A673 (cell line): ENCODE measurements at regions of chr5 and their contacts with region 1.

Region 1: DNA sequence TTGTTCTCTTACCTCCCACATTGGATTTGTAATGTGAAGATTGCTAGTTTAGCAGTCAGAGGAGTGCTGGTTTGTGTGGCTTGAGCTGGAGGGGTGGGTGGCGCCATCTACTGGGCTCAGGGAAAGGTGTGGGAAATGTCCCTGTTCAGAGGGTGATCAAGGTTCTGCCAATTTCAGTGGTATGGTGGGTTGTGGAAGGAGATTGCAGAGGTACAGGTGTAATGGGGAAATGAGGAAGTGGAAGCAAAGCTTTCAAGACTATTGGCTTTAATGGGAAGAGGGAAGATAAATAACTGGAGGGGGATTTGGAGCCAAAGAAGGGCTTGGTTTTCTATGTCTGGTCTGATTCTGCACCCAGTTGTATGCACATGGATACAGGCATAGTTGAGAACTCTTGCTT is 76.4 kb downstream of the OSMR start:
- DNase-seq: peak; percentile 72
- H3K4me3 ChIP-seq: no peak overlapping the region
- H3K27ac ChIP-seq: no peak overlapping the region
- H3K4me1 ChIP-seq: no peaks in the 10 kb centered on the region
- H3K27me3 ChIP-seq: no peaks in the 10 kb centered on the region
- CTCF ChIP-seq: peak; percentile 96

Region 2: DNA sequence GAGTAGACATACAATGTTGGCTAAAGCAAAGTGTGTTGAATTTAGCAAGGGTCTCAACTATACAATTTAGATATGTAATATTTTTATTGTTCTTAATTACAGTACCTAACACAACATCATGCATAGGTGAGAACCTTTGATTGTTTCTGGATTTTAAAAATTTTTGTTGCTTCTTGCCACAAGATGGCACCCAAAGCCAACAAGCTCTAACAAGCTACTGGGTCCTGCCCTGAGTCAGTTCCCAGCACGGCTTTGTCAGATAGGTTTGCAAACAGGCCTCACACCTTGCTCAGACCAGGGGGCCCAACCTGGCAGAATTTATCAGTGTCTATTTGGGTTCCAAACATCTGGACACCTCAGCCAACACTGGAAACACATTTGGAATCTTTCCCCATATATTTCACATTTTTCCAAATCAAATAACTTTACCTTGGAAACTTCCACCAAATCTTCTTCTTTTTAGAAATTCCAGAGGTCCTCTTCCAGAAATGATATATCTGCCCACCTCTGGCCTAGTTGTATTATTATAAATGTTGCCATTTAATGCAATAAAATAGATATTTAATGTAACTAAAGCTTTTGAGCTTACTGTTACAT is 713.3 kb before region 1 on chr5:
- CTCF ChIA-PET with region 1: no interaction called
- POLR2A ChIA-PET with region 1: no interaction called
- intact Hi-C with region 1: loop called (anchors 5 kb)
- DNase-seq: peak; percentile 65
- H3K4me3 ChIP-seq: no peak overlapping the region
- H3K27ac ChIP-seq: no peak overlapping the region
- H3K4me1 ChIP-seq: peaks cover 3% of the 10 kb centered on the region
- H3K27me3 ChIP-seq: no peaks in the 10 kb centered on the region
- CTCF ChIP-seq: peak; percentile 66

Region 3: GRCh38 chr5:38420691-38421390 is 501.4 kb before region 1 on chr5:
- CTCF ChIA-PET with region 1: interaction called, 4 read pairs
- POLR2A ChIA-PET with region 1: no interaction called
- intact Hi-C with region 1: loop called (anchors 5 kb)
- DNase-seq: peak; percentile 89
- H3K4me3 ChIP-seq: no peak overlapping the region
- H3K27ac ChIP-seq: peak overlapping the region; percentile 1
- H3K4me1 ChIP-seq: peaks cover 13% of the 10 kb centered on the region
- H3K27me3 ChIP-seq: no peaks in the 10 kb centered on the region
- CTCF ChIP-seq: peak; percentile 89

Region 4: DNA sequence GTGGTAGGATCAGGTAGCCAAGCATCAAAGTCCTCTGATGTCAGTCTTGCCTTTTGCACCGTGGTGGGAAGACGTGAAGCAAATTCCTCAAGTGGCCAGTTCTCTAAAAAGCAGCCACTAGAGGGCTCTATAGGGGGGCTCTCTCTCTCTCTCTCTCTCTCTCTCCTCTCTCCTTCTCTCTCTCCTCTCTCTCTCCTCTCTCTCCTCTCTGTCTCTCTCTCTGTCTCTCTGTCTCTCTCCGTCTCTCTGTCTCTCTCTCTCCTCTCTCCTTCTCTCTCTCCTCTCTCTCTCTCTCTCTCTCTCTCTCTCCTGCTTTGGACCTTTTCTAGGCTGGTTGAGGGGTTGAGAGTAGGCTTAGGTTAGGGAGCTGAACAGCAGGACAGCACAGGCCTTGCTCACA is 90.3 kb before region 1 on chr5:
- CTCF ChIA-PET with region 1: interaction called, 4 read pairs
- POLR2A ChIA-PET with region 1: no interaction called
- intact Hi-C with region 1: loop called (anchors 5 kb)
- DNase-seq: peak; percentile 82
- H3K4me3 ChIP-seq: no peak overlapping the region
- H3K27ac ChIP-seq: no peak overlapping the region
- H3K4me1 ChIP-seq: peaks cover 22% of the 10 kb centered on the region
- H3K27me3 ChIP-seq: no peaks in the 10 kb centered on the region
- CTCF ChIP-seq: peak; percentile 79

Region 5: GRCh38 chr5:39309534-39310305 is 387.5 kb after region 1 on chr5:
- CTCF ChIA-PET with region 1: no interaction called
- POLR2A ChIA-PET with region 1: no interaction called
- intact Hi-C with region 1: no loop called
- DNase-seq: no peak
- H3K4me3 ChIP-seq: no peak overlapping the region
- H3K27ac ChIP-seq: no peak overlapping the region
- H3K4me1 ChIP-seq: no peaks in the 10 kb centered on the region
- H3K27me3 ChIP-seq: no peaks in the 10 kb centered on the region
- CTCF ChIP-seq: no peak